ENCODE measurements at regions of chr12 and their contacts with region 1.

Region 1: GRCh38 chr12:65430571-65431306 is 152.3 kb downstream of the MSRB3 start:
- DNase-seq: peak; percentile 26
- H3K4me3 Mint-ChIP-seq: no peak overlapping the region
- H3K27ac Mint-ChIP-seq: peak overlapping the region; percentile 20
- H3K4me1 Mint-ChIP-seq: peaks cover 57% of the 10 kb centered on the region
- H3K27me3 Mint-ChIP-seq: no peaks in the 10 kb centered on the region
- CTCF ChIP-seq: no peak

Region 2: GRCh38 chr12:65319688-65320200 is 111.0 kb before region 1 on chr12:
- CTCF ChIA-PET with region 1: no interaction called
- intact Hi-C with region 1: loop called (anchors 5 kb)
- DNase-seq: no peak
- H3K4me3 Mint-ChIP-seq: no peak overlapping the region
- H3K27ac Mint-ChIP-seq: no peak overlapping the region
- H3K4me1 Mint-ChIP-seq: peaks cover 17% of the 10 kb centered on the region
- H3K27me3 Mint-ChIP-seq: no peaks in the 10 kb centered on the region
- CTCF ChIP-seq: no peak

Measured in Calu3 (cell line).